ENCODE measurements at regions of chr17 and their contacts with region 1.

Region 1: GRCh38 chr17:77734341-77735080 is 224.0 kb upstream of the TNRC6C start:
- DNase-seq: peak; percentile 70

Region 2: GRCh38 chr17:77572065-77572601 is 162.4 kb before region 1 on chr17:
- in situ Hi-C with region 1: no loop called
- DNase-seq: peak; percentile 72

Region 3: DNA sequence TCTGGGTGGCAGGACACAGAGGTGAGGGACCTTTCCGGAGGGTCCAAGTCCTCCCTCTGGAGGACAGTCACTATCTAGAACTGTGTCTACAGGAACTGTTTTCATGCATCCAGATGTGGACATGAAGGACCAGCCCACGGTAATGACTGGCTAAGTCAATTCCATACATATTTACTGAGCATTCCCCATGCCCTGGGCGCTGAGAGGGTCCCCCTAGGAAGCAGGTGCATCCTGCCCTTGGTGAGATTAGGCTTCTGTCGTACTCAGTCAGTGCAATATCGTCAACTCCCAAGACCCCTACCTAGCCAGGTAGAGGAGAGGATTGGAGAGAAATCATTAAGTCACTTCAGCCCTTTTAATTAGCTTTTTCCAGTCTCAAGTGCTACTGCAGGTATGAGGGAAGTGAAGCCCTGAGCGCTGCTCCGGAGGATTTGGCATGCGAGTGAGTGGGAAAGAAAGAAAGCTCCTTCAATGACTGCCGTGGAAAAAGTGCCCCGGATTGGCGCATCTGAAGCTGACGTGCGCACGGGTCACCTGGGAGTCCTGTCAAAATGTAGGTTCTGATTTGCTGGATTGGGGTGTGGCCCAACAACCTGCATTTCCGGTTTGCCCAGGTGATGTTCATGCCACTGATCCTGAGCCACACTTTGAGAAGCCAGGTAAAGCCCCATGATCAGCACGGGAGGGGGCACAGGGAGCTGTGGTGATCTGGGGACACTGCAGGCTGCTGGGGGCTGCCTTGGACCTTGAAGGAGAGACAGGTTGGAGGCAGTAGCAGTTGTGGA is 143.4 kb before region 1 on chr17:
- in situ Hi-C with region 1: loop called (anchors 10 kb)
- DNase-seq: no peak

Measured in G401 (cell line).